Transverse colon (tissue), 4 donors: ENCODE measurements at regions of chr21 and their contacts with region 1.

Region 1: GRCh38 chr21:30668776-30669175 is 26.1 kb downstream of the KRTAP20-3 start:
- DNase-seq: no peak
- H3K4me3 ChIP-seq: no peak overlapping the region
- H3K27ac ChIP-seq: no peak overlapping the region
- H3K4me1 ChIP-seq: no peaks in the 10 kb centered on the region
- H3K27me3 ChIP-seq: no peaks in the 10 kb centered on the region
- CTCF ChIP-seq: no peak
- EP300 ChIP-seq: no peak
- POLR2A ChIP-seq: no peak

Region 2: GRCh38 chr21:29372063-29372802 is 1296.5 kb before region 1 on chr21:
- in situ Hi-C with region 1: no loop called
- intact Hi-C with region 1: no loop called
- DNase-seq: peak; percentile 42
- H3K4me3 ChIP-seq: no peak overlapping the region
- H3K27ac ChIP-seq: no peak overlapping the region
- H3K4me1 ChIP-seq: no peaks in the 10 kb centered on the region
- H3K27me3 ChIP-seq: no peaks in the 10 kb centered on the region
- CTCF ChIP-seq: peak; percentile 74 to 85 (median 79)
- EP300 ChIP-seq: no peak
- POLR2A ChIP-seq: no peak

Region 3: DNA sequence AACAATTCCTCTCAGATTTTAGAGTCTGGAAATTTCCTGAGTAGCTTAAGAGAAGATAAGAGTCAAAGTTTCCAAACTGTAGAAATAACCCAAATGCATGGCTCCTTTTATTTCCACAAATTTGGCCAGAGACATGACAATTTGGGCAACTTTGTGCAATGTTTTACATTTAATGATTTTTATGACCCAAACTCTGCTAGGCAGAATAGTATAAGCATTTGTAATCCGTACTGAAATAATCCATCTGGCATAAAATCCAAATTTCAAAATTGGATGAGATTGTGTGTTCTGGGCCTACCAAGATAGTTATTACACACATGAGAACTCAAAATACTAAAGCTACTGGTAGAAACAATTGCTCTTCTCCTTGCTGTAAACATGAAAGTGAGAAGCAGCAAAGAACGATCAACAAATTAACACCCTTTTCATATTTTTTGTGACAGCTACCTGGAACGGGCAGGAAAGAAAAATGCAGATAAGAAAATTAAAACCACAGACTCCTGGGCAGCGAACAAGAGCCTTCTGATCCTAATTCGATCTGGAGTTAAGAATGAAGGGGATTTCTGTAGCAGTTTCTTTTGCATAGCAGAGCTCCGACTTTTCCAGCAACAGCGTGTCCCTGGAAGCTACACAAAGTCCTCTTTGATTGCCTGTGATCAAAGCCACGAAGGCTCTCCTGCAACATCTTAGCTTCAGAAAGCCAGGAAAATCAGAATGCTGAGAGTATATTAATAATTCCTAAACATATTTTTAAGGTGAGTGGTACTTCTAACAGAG is 920.2 kb before region 1 on chr21:
- in situ Hi-C with region 1: no loop called
- intact Hi-C with region 1: no loop called
- DNase-seq: no peak
- H3K4me3 ChIP-seq: no peak overlapping the region
- H3K27ac ChIP-seq: no peak overlapping the region
- H3K4me1 ChIP-seq: no peaks in the 10 kb centered on the region
- H3K27me3 ChIP-seq: no peaks in the 10 kb centered on the region
- CTCF ChIP-seq: no peak
- EP300 ChIP-seq: no peak
- POLR2A ChIP-seq: no peak

Region 4: DNA sequence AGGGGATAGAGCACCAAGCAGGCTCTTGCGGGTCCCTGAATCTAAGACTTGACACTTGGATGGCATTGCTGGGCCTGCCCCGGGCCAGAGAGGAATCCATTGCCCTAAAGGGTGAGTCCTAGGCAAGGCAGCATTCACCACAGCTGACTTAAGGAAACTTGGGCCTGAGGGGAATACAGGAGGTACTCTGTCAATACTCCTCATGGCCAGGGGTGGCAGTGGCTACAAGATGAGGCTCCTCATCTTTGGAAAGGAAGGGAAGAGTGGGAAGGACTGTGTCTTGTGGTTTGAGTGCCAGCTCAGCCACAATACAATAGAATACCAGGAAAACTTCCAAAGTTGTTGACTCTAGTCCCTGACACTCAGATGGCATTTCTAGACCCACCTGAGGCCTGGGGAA is 62.8 kb before region 1 on chr21:
- in situ Hi-C with region 1: no loop called
- intact Hi-C with region 1: loop called (anchors 10 kb)
- DNase-seq: no peak
- H3K4me3 ChIP-seq: no peak overlapping the region
- H3K27ac ChIP-seq: no peak overlapping the region
- H3K4me1 ChIP-seq: no peaks in the 10 kb centered on the region
- H3K27me3 ChIP-seq: no peaks in the 10 kb centered on the region
- CTCF ChIP-seq: no peak
- EP300 ChIP-seq: no peak
- POLR2A ChIP-seq: no peak

Region 5: GRCh38 chr21:30747159-30747558 is 78.4 kb after region 1 on chr21 and contains the start of gene KRTAP21-2:
- in situ Hi-C with region 1: no loop called
- intact Hi-C with region 1: no loop called
- DNase-seq: no peak
- H3K4me3 ChIP-seq: no peak within 1 kb of the TSS
- H3K27ac ChIP-seq: no peak within 1 kb of the TSS
- H3K4me1 ChIP-seq: no peaks in the 10 kb centered on the region
- H3K27me3 ChIP-seq: no peaks in the 10 kb centered on the region
- CTCF ChIP-seq: no peak
- EP300 ChIP-seq: no peak
- POLR2A ChIP-seq: no peak
- total RNA-seq, gene KRTAP21-2: not detected